ENCODE measurements at regions of chr19 and their contacts with region 1.

Region 1: GRCh38 chr19:49817964-49818648 is at the start of gene MED25:
- DNase-seq: peak; percentile 87 to 93
- H3K4me3 ChIP-seq: peak within 1 kb of the TSS; percentile 100
- H3K4me3 Mint-ChIP-seq: peak within 1 kb of the TSS; percentile 85
- H3K27ac Mint-ChIP-seq: peak within 1 kb of the TSS; percentile 96
- H3K4me1 ChIP-seq: no peaks in the 10 kb centered on the region; the same call in 1 of the 2 replicates
- H3K4me1 Mint-ChIP-seq: peaks cover 7% of the 10 kb centered on the region
- H3K27me3 ChIP-seq: no peaks in the 10 kb centered on the region
- H3K27me3 Mint-ChIP-seq: no peaks in the 10 kb centered on the region
- CTCF ChIP-seq: peak; percentile 2 to 48
- total RNA-seq, gene MED25: 102 and 104 TPM in 2 replicates

Region 2: DNA sequence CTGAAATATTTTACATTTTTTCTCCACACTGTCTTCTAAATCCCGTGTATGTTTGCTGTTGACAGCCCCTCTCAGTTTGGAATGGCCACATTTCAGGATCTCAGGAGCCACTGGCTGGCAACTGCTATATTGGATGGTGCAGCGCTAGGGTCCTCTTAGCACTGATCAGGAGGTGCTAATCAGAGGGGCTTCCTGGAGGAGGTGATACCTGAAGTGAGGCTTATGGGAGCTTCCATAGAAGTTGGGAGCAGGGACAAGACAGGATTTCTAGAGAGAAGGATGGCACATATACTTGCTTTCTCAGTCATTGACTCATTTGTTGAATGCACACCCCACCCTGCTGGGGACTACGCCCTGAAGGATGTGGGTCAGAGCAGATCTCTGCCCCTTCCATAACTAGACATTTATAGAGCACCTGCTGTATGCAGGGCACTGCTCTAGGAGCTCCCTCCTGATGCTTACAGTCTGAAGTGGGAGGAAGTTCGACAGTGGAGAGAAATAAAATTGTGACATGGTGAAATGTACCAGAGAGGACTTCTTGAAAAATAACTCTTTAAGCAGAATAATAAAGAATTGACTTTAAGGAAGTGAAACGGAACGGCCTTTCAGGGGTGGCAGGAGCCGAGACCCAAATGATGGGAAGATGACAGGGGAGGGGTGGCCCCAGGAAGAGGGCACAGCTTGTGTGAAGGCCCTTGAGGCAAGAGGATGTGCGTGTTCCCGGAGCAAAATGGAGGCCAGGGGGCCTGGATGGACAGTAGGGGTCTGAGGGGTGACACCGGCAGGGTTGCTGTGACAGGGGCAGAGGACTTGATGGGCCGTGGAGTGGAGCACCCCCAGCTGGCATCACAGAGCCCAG is 38.1 kb before region 1 on chr19:
- CTCF ChIA-PET with region 1: no interaction called
- POLR2A ChIA-PET with region 1: no interaction called
- intact Hi-C with region 1: no loop called
- DNase-seq: no peak
- H3K4me3 ChIP-seq: no peak overlapping the region
- H3K4me3 Mint-ChIP-seq: no peak overlapping the region
- H3K27ac Mint-ChIP-seq: peak overlapping the region; percentile 43
- H3K4me1 ChIP-seq: no peaks in the 10 kb centered on the region
- H3K4me1 Mint-ChIP-seq: peaks cover 16% of the 10 kb centered on the region
- H3K27me3 ChIP-seq: no peaks in the 10 kb centered on the region
- H3K27me3 Mint-ChIP-seq: no peaks in the 10 kb centered on the region
- CTCF ChIP-seq: no peak

Region 3: GRCh38 chr19:49832556-49832955 is 14.4 kb after region 1 on chr19:
- CTCF ChIA-PET with region 1: no interaction called
- POLR2A ChIA-PET with region 1: interaction called, 10 read pairs
- intact Hi-C with region 1: no loop called
- DNase-seq: no peak
- H3K4me3 ChIP-seq: no peak overlapping the region
- H3K4me3 Mint-ChIP-seq: no peak overlapping the region
- H3K27ac Mint-ChIP-seq: no peak overlapping the region
- H3K4me1 ChIP-seq: no peaks in the 10 kb centered on the region
- H3K4me1 Mint-ChIP-seq: no peaks in the 10 kb centered on the region
- H3K27me3 ChIP-seq: no peaks in the 10 kb centered on the region
- H3K27me3 Mint-ChIP-seq: no peaks in the 10 kb centered on the region
- CTCF ChIP-seq: no peak

Region 4: DNA sequence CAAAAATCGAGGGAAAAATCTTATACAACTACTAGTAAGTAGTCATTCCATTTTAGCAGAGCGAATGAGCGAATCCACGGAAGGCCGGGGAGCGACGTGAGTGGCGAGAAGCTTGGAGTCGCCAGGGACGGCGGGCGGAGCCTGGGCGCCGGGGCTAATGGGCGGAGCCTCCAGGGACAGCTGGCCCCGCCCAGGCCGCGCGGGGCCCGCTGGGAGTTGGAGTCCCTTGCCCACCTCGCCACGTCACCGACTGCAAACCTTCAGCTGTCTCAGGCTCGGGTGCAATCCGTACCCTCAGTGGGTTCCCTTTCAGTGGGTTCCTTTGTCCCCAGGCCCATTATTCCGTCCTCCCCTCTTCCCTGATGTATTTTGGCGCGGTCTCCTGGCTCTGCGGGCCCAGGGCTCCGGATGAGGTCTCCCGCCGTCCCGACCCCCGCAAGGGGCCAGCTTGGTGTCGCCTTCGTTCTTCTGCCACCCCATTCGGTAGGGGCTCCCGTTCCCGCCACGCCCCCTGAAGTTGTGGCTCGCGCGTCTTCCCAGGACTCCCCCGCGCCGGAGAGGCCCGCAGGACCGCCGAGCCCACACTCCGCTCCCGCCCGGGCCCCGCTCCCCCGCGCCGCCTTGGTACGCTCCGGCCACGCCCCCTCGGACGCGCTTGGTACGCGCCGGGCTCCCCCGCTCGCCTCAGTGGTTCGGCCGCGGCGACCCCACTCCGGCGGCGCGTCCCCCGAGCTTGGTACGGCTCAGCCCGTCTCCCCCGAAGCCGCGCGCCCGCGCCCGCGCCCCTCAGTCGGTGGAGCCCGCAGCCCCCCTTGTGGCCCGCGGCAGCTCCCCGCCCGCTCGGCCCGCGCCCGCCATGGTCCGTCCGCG is 32.6 kb after region 1 on chr19 and contains the start of gene PTOV1:
- CTCF ChIA-PET with region 1: no interaction called
- POLR2A ChIA-PET with region 1: interaction called, 5 read pairs
- intact Hi-C with region 1: loop called (anchors 5 kb)
- DNase-seq: peak; percentile 94 to 96
- H3K4me3 ChIP-seq: peak within 1 kb of the TSS; percentile 73
- H3K4me3 Mint-ChIP-seq: peak within 1 kb of the TSS; percentile 82
- H3K27ac Mint-ChIP-seq: peak within 1 kb of the TSS; percentile 97
- H3K4me1 ChIP-seq: peaks cover 14% of the 10 kb centered on the region
- H3K4me1 Mint-ChIP-seq: peaks cover 17% of the 10 kb centered on the region
- H3K27me3 ChIP-seq: no peaks in the 10 kb centered on the region
- H3K27me3 Mint-ChIP-seq: no peaks in the 10 kb centered on the region
- CTCF ChIP-seq: no peak
- total RNA-seq, gene PTOV1: 209 and 224 TPM in 2 replicates

Region 5: GRCh38 chr19:49896863-49897621 is 78.9 kb after region 1 on chr19 and contains the start of gene IL4I1:
- CTCF ChIA-PET with region 1: no interaction called
- POLR2A ChIA-PET with region 1: no interaction called
- intact Hi-C with region 1: no loop called
- DNase-seq: no peak
- H3K4me3 ChIP-seq: no peak within 1 kb of the TSS
- H3K4me3 Mint-ChIP-seq: no peak within 1 kb of the TSS
- H3K27ac Mint-ChIP-seq: no peak within 1 kb of the TSS
- H3K4me1 ChIP-seq: no peaks in the 10 kb centered on the region
- H3K4me1 Mint-ChIP-seq: no peaks in the 10 kb centered on the region
- H3K27me3 ChIP-seq: no peaks in the 10 kb centered on the region
- H3K27me3 Mint-ChIP-seq: peaks cover 3% of the 10 kb centered on the region
- CTCF ChIP-seq: no peak
- total RNA-seq, gene IL4I1: 0.61 and 1.1 TPM in 2 replicates

Measured in Caco-2 (cell line).